Gastrocnemius medialis (tissue), 4 donors: ENCODE measurements at regions of chr9 and their contacts with region 1.

Region 1: DNA sequence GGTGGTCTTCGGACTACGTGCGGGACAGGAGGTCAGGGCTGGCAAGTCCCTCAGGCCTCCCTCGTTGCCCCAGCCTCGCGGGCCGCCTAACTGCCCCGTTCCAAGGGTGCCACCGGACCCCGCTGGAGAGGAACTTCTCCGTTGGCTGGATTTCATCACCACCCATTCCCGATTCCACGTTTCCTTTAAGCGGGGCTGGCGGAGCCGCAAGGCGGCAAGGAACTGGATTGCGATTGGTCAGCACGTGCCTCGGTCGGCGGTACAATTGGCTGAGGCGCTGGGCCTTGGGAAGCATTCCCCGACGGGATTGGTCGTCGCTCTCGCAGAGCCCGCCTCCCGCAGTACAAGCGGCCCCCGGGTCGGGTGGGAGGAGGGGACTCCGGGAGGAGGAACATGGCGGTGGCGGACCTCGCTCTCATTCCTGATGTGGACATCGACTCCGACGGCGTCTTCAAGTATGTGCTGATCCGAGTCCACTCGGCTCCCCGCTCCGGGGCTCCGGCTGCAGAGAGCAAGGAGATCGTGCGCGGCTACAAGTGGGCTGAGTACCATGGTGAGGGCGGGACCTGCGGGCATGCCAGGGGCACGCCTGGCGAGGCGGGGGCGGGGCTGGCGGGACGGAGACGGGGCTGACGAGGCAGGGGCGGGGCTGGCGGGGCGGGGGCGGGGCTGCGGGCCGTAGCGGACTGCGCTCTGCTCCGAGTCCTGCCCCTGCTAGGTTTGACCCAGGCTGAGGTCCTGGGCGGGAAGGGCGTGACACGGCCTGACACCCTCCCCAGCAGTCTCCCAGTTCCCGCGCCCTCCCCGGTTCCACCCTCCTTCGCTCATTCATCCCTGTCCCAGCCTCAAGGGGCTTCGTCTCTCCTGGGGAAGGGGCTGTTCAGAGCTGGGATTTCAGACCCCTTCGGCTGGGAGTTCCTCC is at the start of gene PHPT1:
- DNase-seq: peak; percentile 99
- ATAC-seq: peak; percentile 84 to 85
- H3K4me3 ChIP-seq: peak within 1 kb of the TSS; percentile 73 to 86 (median 82)
- H3K27ac ChIP-seq: peak within 1 kb of the TSS; percentile 89 to 97 (median 92)
- H3K4me1 ChIP-seq: peaks cover 20 to 32% of the 10 kb centered on the region in 2 donors
- H3K27me3 ChIP-seq: peaks cover 4 to 16% (median 11%) of the 10 kb centered on the region in 3 donors
- CTCF ChIP-seq: no peak
- POLR2A ChIP-seq: peak; percentile 85 to 91
- total RNA-seq, gene PHPT1: 98.8 to 204 (median 152) TPM

Region 2: GRCh38 chr9:136807281-136808074 is 41.8 kb before region 1 on chr9 and contains the start of gene RABL6:
- in situ Hi-C with region 1: no loop called
- intact Hi-C with region 1: loop called (anchors 2 kb)
- DNase-seq: peak; percentile 29 to 66
- ATAC-seq: peak; percentile 92 to 93
- H3K4me3 ChIP-seq: peak within 1 kb of the TSS; percentile 76 to 98 (median 92)
- H3K27ac ChIP-seq: peak within 1 kb of the TSS; percentile 82 to 94 (median 90)
- H3K4me1 ChIP-seq: peaks cover 31 to 35% of the 10 kb centered on the region in 2 donors
- H3K27me3 ChIP-seq: peaks cover 0 to under 1% (median 0%) of the 10 kb centered on the region in 3 donors
- CTCF ChIP-seq: no peak
- POLR2A ChIP-seq: peak; percentile 65 to 80
- total RNA-seq, gene RABL6: 84.9 to 121 (median 105) TPM

Region 3: DNA sequence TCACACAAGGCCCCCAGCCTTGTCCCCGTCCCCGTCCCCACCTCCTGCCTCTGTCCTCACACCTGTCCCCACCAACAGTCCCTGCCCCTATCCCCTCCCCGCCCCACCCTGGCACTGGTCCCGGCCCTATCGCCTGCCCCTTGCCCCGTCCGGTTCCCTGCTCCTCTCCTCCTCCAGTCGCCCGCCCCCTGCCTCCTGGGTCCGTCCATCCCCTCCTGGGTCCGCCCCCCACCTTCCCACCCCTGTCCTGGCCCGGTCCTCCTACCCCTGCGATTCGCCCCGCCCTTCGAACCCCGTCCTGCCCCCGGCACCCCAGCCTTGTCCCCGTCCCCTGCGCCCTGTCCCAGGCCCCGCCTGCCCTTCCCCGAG is 16.4 kb after region 1 on chr9:
- in situ Hi-C with region 1: no loop called
- intact Hi-C with region 1: loop called (anchors 1 kb)
- DNase-seq: no peak
- ATAC-seq: peak; percentile 4 to 31
- H3K4me3 ChIP-seq: peak overlapping the region; percentile 87 to 100 (median 94)
- H3K27ac ChIP-seq: peak overlapping the region; percentile 88 to 100 (median 97)
- H3K4me1 ChIP-seq: peaks cover 21 to 27% of the 10 kb centered on the region in 2 donors
- H3K27me3 ChIP-seq: no peaks in the 10 kb centered on the region
- CTCF ChIP-seq: no peak
- POLR2A ChIP-seq: no peak

Region 4: DNA sequence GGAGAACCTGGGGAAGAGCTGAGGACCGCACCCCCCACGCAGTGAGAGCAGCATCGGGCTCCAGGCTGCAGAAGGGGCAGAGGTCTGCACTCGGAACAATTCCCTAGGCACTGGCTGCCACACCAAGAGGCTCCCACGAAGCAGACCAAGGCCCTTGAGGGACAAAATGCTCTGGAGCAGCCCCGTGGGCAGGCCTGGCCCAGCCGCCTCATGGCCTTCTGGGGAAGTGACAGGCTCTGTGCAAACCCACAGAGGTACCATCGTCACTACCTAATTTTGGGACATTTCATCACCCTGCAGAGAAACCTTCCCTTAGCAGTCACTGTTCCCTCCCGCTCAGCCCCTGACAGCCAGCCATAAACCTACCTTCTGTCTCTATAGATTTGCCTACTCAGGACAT is 79.3 kb after region 1 on chr9:
- in situ Hi-C with region 1: no loop called
- intact Hi-C with region 1: loop called (anchors 5 kb)
- DNase-seq: peak; percentile 75 to 89
- ATAC-seq: peak; percentile 82 to 95
- H3K4me3 ChIP-seq: peak overlapping the region in 3 of 4 donors; percentile 14 to 43 (median 36)
- H3K27ac ChIP-seq: peak overlapping the region; percentile 91 to 96 (median 96)
- H3K4me1 ChIP-seq: peaks cover 37 to 64% of the 10 kb centered on the region in 2 donors
- H3K27me3 ChIP-seq: no peaks in the 10 kb centered on the region
- CTCF ChIP-seq: peak; percentile 32 to 67 (median 50)
- POLR2A ChIP-seq: peak; percentile 86 to 88

Region 5: DNA sequence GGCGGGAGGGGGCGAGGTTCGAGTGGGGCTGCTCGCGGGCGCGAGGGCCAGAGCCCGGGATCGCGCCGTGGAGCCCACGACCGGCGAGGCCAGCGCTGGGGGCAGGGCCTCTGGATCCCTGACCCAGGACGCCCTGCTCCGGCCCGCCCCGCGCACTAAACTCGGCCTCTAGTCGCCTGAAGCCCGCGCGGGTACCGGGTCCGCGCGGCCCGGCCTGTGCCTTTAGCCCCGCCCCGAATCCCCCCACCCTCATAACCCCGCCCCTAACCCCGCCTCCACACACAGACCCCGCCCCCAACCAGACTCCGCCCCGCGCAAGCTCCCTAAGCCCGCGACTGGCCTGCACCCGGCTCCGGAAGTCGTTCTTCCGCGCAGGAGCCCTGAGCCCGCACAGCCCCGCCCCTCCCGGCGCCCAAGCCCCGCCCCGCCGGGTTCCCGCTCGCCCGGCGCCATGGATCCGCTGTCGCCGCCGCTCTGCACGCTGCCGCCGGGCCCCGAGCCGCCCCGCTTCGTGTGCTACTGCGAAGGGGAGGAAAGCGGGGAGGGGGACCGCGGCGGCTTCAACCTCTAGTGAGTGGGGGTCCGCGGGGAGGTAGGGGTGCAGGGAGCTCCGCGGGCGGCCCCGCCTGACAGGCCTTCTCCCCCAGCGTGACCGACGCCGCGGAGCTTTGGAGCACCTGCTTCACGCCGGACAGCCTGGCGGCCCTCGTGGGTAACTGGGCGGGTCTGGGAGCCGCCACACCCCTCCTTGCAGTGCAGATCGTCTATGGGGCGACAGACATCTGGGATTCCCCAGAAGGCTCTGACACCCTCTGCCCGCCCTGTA is 142.9 kb after region 1 on chr9 and contains the start of gene PAXX:
- in situ Hi-C with region 1: no loop called
- intact Hi-C with region 1: loop called (anchors 5 kb)
- DNase-seq: peak; percentile 85 to 88
- ATAC-seq: peak; percentile 90 to 94
- H3K4me3 ChIP-seq: peak within 1 kb of the TSS; percentile 65 to 95 (median 82)
- H3K27ac ChIP-seq: peak within 1 kb of the TSS; percentile 58 to 86 (median 80)
- H3K4me1 ChIP-seq: peaks cover 6 to 12% of the 10 kb centered on the region in 2 donors
- H3K27me3 ChIP-seq: peaks cover 14 to 19% (median 18%) of the 10 kb centered on the region in 3 donors
- CTCF ChIP-seq: no peak
- POLR2A ChIP-seq: peak in 1 of 2 donors; percentile 40
- total RNA-seq, gene PAXX: 10.8 to 15.6 (median 14.6) TPM